ENCODE measurements at regions of chr17 and their contacts with region 1.

Region 1: GRCh38 chr17:43524945-43525575 is 21.1 kb downstream of the ETV4 start:
- DNase-seq: no peak
- H3K4me3 ChIP-seq: no peak overlapping the region
- H3K27me3 ChIP-seq: no peaks in the 10 kb centered on the region
- CTCF ChIP-seq: no peak

Region 2: GRCh38 chr17:43570518-43570928 is 45.5 kb after region 1 on chr17:
- CTCF ChIA-PET with region 1: interaction called, 42 read pairs
- POLR2A ChIA-PET with region 1: no interaction called
- DNase-seq: peak; percentile 51
- H3K4me3 ChIP-seq: no peak overlapping the region
- H3K27me3 ChIP-seq: peaks cover 1% of the 10 kb centered on the region; the same call in 1 of the 2 replicates
- CTCF ChIP-seq: no peak

Measured in BJ (cell line).